IMR-90 (cell line): ENCODE measurements at regions of chr1 and their contacts with region 1.

Region 1: DNA sequence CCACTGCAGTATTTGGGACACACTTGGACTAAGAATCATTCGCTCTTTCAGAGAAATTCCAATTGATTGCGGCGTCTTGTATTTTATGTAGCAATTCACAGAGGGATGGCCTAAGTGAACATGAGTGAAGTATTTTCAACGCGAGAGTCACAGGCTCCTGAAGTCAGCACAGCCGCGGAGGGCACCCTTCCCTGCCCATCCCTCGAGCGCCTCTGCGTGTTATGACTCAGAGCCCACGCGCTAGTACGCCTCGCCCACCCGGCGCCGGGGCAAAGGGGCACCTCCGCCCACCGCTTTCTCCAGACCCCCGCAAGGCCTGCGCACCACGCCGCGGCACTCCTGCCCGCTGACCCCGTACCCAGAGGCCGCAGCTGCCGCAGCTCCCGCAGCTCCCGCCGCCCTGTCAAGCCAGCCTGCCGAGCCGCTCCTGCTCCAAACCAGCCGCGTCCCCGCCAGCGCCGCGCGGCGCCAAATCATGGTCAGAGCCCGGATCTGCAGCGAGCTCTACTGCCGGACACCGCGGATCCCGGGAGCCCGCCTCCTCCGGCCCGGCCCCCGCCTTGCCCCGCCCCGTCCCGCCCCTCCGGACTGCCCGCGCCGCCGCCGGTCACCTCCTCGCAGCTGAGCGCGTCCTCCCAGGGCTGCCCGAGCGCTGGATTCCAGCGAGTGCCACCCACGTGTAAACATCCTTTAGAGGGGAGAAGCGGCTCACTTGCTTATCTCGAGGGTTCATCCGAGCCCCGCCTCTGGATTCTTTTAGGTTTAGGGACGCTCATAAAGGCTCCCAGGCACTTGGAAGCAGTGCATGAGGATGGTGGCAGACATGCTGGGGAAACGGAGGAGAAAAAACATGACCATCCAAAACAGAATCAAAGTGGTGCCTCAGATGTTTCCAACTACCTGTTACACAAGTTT is at the start of gene GLRX2:
- DNase-seq: peak; percentile 85
- ATAC-seq: peak; percentile 96
- H3K4me3 ChIP-seq: peak within 1 kb of the TSS; percentile 90
- H3K27ac ChIP-seq: peak within 1 kb of the TSS; percentile 75
- H3K4me1 ChIP-seq: no peaks in the 10 kb centered on the region
- H3K27me3 ChIP-seq: no peaks in the 10 kb centered on the region
- CTCF ChIP-seq: 0 out of 2 replicates have a peak, but pooled peaks have one; percentile 8
- POLR2A ChIP-seq: peak; percentile 85
- RAD21 ChIP-seq: peak; percentile 48
- total RNA-seq, gene GLRX2: 2.0 and 12.8 TPM in 2 replicates

Region 2: GRCh38 chr1:193059268-193060225 is 45.6 kb before region 1 on chr1 and contains the starts of genes RO60 and UCHL5:
- CTCF ChIA-PET with region 1: no interaction called
- POLR2A ChIA-PET with region 1: no interaction called
- dilution Hi-C with region 1: no loop called
- in situ Hi-C with region 1: no loop called
- intact Hi-C with region 1: loop called (anchors 2 kb)
- DNase-seq: peak; percentile 99
- ATAC-seq: peak; percentile 89
- H3K4me3 ChIP-seq: peak within 1 kb of the TSS; percentile 82
- H3K27ac ChIP-seq: peak within 1 kb of the TSS; percentile 95
- H3K4me1 ChIP-seq: peaks cover 2% of the 10 kb centered on the region; the same call in 1 of the 2 replicates
- H3K27me3 ChIP-seq: no peaks in the 10 kb centered on the region
- CTCF ChIP-seq: no peak
- POLR2A ChIP-seq: peak; percentile 93
- RAD21 ChIP-seq: no peak
- total RNA-seq, gene RO60: 161 and 184 TPM in 2 replicates
- total RNA-seq, gene UCHL5: 12.9 and 25.8 TPM in 2 replicates